HCT116 (cell line): ENCODE measurements at regions of chr2 and their contacts with region 1.

Region 1: DNA sequence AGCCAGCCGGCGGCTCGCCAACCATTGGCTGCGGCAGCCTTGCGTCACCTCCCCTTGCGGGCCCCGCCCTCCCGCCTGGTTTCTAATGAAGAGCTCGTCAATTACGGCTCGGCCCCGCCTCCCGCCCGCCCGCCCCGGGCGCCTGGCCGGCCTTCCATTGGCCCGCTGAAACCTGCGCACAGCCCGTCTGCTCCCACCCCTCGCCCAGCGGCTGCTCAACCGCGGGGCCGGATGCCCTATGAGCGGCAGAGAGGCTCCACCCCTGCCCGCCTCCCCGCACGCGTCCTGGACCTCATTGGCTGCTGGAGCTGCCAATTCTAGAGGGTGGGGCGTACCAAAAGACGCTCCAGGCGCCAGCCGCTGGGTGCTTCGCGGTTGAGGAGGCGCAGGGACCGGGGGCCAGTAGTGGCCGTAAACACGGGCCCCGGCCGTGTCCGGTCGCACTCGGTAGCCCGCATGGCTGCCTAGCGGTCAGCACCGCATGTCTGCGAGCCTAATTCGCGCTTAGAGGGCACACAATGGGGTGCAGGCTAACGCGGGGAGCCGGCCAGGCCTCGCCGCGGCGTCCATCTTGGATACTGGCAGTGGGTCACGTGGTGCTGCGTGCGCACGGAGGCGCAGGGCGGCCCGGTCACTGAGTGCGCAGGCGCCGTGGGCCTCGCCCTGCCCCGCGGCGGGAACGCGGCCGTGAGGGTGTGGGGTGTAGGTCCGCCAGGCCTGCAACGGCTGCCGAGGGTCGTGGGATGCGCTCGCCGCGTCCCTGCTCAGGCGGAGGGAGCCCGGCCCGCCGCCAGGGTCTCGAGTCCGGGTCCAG is 454 bp upstream of the HDAC4 start:
- DNase-seq: peak; percentile 95
- ATAC-seq: peak; percentile 94
- H3K4me3 ChIP-seq: peak overlapping the region; percentile 67 to 76
- H3K27ac ChIP-seq: peak overlapping the region; percentile 94
- H3K4me1 ChIP-seq: peaks cover 16 to 27% of the 10 kb centered on the region in 2 experiments
- H3K27me3 ChIP-seq: no peaks in the 10 kb centered on the region
- CTCF ChIP-seq: no peak
- POLR2A ChIP-seq: no peak
- RAD21 ChIP-seq: no peak

Region 2: GRCh38 chr2:239143858-239144718 is 257.2 kb before region 1 on chr2:
- CTCF ChIA-PET with region 1: no interaction called
- POLR2A ChIA-PET with region 1: interaction called, 4 read pairs
- RAD21 ChIA-PET with region 1: no interaction called
- intact Hi-C with region 1: loop called (anchors 5 kb)
- DNase-seq: peak; percentile 21
- ATAC-seq: peak; percentile 88
- H3K4me3 ChIP-seq: no peak overlapping the region
- H3K27ac ChIP-seq: no peak overlapping the region; the same call in 1 of the 2 replicates
- H3K4me1 ChIP-seq: peaks cover 0 to 4% of the 10 kb centered on the region in 2 experiments; a peak in 1 of 4 replicates
- H3K27me3 ChIP-seq: no peaks in the 10 kb centered on the region
- CTCF ChIP-seq: peak; percentile 24 to 80 (median 75); a peak in 5 of 6 replicates
- POLR2A ChIP-seq: no peak
- RAD21 ChIP-seq: peak; percentile 63

Region 3: GRCh38 chr2:239249776-239250175 is 151.5 kb before region 1 on chr2:
- CTCF ChIA-PET with region 1: no interaction called
- POLR2A ChIA-PET with region 1: interaction called, 3 read pairs
- RAD21 ChIA-PET with region 1: no interaction called
- intact Hi-C with region 1: loop called (anchors 5 kb)
- DNase-seq: no peak
- ATAC-seq: peak; percentile 44
- H3K4me3 ChIP-seq: peak overlapping the region in 1 of 2 experiments; percentile 27; a peak in 2 of 4 replicates
- H3K27ac ChIP-seq: peak overlapping the region; percentile 95
- H3K4me1 ChIP-seq: peaks cover 70 to 99% of the 10 kb centered on the region in 2 experiments
- H3K27me3 ChIP-seq: no peaks in the 10 kb centered on the region
- CTCF ChIP-seq: no peak
- POLR2A ChIP-seq: no peak
- RAD21 ChIP-seq: no peak

Region 4: GRCh38 chr2:239991689-239992314 is 590.5 kb after region 1 on chr2:
- CTCF ChIA-PET with region 1: no interaction called
- POLR2A ChIA-PET with region 1: no interaction called
- RAD21 ChIA-PET with region 1: no interaction called
- intact Hi-C with region 1: loop called (anchors 10 kb)
- DNase-seq: peak; percentile 27
- ATAC-seq: peak; percentile 70
- H3K4me3 ChIP-seq: no peak overlapping the region
- H3K27ac ChIP-seq: no peak overlapping the region
- H3K4me1 ChIP-seq: no peaks in the 10 kb centered on the region
- H3K27me3 ChIP-seq: no peaks in the 10 kb centered on the region
- CTCF ChIP-seq: peak; percentile 62 to 89 (median 72); a peak in 5 of 6 replicates
- POLR2A ChIP-seq: no peak
- RAD21 ChIP-seq: peak; percentile 76